ENCODE measurements at regions of chr15 and their contacts with region 1.

Region 1: DNA sequence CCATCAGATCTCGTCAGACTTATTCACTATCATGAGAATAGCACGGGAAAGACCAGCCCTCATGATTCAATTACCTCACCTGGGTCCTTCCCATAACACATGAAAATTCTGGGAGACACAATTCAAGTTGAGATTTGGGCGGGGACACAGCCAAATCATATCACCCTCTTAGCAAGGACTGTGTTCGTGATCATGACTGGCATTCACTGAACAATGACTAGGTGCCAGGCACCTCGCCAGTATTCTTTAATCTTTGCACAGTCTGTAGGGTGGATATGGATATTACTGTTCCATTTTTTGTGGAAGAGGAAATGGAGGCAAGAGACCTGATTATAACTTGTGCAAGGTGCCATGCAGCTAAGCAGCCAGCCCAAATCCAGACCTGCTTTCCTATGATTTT is 77.5 kb downstream of the IGF1R start:
- DNase-seq: no peak
- H3K4me3 ChIP-seq: no peak overlapping the region
- H3K27ac ChIP-seq: peak overlapping the region in 1 of 2 donors; percentile 81
- H3K4me1 ChIP-seq: peaks cover 0 to 100% (median 67%) of the 10 kb centered on the region in 4 donors
- H3K27me3 ChIP-seq: no peaks in the 10 kb centered on the region
- CTCF ChIP-seq: no peak

Region 2: GRCh38 chr15:98709036-98709435 is 16.8 kb before region 1 on chr15:
- intact Hi-C with region 1: loop called (anchors 1 kb)
- DNase-seq: no peak
- H3K4me3 ChIP-seq: no peak overlapping the region
- H3K27ac ChIP-seq: peak overlapping the region in 1 of 2 donors; percentile 43
- H3K4me1 ChIP-seq: peaks cover 0 to 76% (median 53%) of the 10 kb centered on the region in 4 donors
- H3K27me3 ChIP-seq: no peaks in the 10 kb centered on the region
- CTCF ChIP-seq: no peak